K562 (cell line): ENCODE measurements at regions of chr1 and their contacts with region 1.

Region 1: GRCh38 chr1:42340093-42340684 is 5.2 kb upstream of the FOXJ3 start:
- DNase-seq: no peak
- ATAC-seq: no peak
- H3K4me3 ChIP-seq: no peak overlapping the region
- H3K27ac ChIP-seq: no peak overlapping the region
- H3K4me1 ChIP-seq: peaks cover 9% of the 10 kb centered on the region in 2 experiments; a peak in 2 of 5 replicates
- H3K27me3 ChIP-seq: peaks cover under 1 to 7% of the 10 kb centered on the region in 2 experiments; a peak in 4 of 5 replicates
- CTCF ChIP-seq: no peak
- EP300 ChIP-seq: no peak
- POLR2A ChIP-seq: no peak
- RAD21 ChIP-seq: no peak

Region 2: DNA sequence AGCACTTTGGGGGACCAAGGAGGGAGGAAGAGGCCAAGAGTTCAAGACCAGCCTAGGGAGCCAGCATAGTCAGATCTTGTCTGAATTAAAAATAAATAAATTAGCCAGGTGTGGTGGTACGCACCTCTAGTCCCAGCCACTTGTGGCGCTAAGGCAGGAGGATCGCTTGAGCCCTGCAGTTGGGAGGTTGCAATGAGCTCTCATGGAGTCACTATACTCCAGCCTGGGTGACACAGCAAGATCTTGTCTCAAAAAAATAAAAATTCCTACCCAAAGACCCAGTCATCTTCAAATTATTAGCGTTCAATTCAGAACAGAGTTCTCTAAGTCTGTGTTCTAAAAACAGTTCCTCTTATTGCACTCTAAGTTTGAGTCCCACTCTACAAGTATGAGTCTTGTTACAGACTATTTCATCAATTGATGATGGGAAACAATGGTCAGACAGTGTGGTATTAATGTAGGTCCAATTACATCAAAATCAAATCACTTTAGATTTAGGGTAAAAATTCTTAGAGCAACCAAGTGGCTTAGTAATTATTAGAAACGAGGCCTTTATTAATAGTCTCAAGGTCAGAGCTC is 12.1 kb before region 1 on chr1:
- CTCF ChIA-PET with region 1: no interaction called
- POLR2A ChIA-PET with region 1: interaction called, 20 read pairs
- in situ Hi-C with region 1: no loop called
- intact Hi-C with region 1: no loop called
- DNase-seq: peak in 2 of 4 experiments; percentile 40 to 60
- ATAC-seq: peak; percentile 96
- H3K4me3 ChIP-seq: no peak overlapping the region
- H3K27ac ChIP-seq: peak overlapping the region; percentile 16; the same call in 1 of the 3 replicates
- H3K4me1 ChIP-seq: peaks cover 6 to 23% of the 10 kb centered on the region in 2 experiments; a peak in 3 of 5 replicates
- H3K27me3 ChIP-seq: no peaks in the 10 kb centered on the region
- CTCF ChIP-seq: peak; percentile 40 to 52 (median 42)
- EP300 ChIP-seq: no peak
- POLR2A ChIP-seq: no peak
- RAD21 ChIP-seq: no peak

Region 3: GRCh38 chr1:42736150-42736850 is 396.1 kb after region 1 on chr1:
- CTCF ChIA-PET with region 1: no interaction called
- POLR2A ChIA-PET with region 1: no interaction called
- in situ Hi-C with region 1: loop called (anchors 10 kb)
- intact Hi-C with region 1: loop called (anchors 10 kb)
- DNase-seq: peak; percentile 69 to 81 (median 77)
- ATAC-seq: peak; percentile 90
- H3K4me3 ChIP-seq: no peak overlapping the region
- H3K27ac ChIP-seq: no peak overlapping the region
- H3K4me1 ChIP-seq: peaks cover 0 to 45% of the 10 kb centered on the region in 2 experiments; a peak in 3 of 5 replicates
- H3K27me3 ChIP-seq: peaks cover 7 to 49% of the 10 kb centered on the region in 2 experiments; a peak in 4 of 5 replicates
- CTCF ChIP-seq: peak; percentile 69 to 81 (median 73)
- EP300 ChIP-seq: no peak
- POLR2A ChIP-seq: no peak
- RAD21 ChIP-seq: peak in 1 of 2 experiments; percentile 59; a peak in 2 of 4 replicates

Region 4: DNA sequence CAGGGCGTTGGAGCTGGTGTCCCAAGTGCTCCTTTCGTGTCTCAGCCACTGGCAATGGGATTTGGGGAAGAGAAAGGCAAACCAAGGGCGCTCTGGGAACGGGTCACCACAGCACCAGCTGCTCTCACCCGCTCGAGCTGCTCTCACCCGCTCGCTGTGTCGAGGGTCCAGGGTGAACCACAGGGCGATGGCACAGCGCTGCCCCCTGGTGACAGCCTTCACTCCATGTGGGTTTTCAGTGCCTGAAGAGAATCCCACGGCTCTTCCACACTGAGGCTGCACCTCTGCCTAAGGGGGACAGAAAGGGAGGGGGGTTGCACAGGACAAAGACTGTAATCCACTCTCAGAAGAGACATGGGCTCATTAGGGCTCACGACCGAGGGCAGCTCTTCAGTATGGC is 406.9 kb after region 1 on chr1:
- CTCF ChIA-PET with region 1: no interaction called
- POLR2A ChIA-PET with region 1: no interaction called
- in situ Hi-C with region 1: loop called (anchors 10 kb)
- intact Hi-C with region 1: no loop called
- DNase-seq: peak; percentile 43 to 55 (median 52)
- ATAC-seq: peak; percentile 73
- H3K4me3 ChIP-seq: no peak overlapping the region
- H3K27ac ChIP-seq: no peak overlapping the region
- H3K4me1 ChIP-seq: no peaks in the 10 kb centered on the region
- H3K27me3 ChIP-seq: peaks cover 0 to 5% of the 10 kb centered on the region in 2 experiments; a peak in 1 of 5 replicates
- CTCF ChIP-seq: peak; percentile 70 to 82 (median 74)
- EP300 ChIP-seq: no peak
- POLR2A ChIP-seq: no peak
- RAD21 ChIP-seq: peak; percentile 52 to 76